CD4-positive, alpha-beta memory T cell (primary cell): ENCODE measurements at regions of chr20 and their contacts with region 1.

Region 1: DNA sequence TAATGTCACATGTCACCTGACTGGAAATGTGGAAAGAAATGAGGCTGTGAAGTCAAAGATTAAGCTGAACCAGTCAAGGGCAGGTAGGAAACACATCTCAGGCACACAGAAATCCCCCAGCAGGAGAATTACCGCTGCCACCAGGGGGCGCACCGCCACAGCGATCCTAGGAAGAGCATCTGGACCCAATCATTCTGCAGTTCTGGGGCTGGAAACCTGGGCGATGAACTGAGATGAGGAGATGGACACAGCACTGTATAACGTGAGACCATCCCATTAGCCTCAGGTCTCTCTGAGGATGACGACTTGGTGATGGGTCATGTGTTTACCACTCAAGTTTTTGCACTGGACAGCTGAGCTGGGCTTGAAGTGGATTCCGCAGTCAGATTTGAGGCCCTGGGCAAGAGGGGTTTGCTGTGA is 6.5 kb upstream of the SLC24A3 start:
- DNase-seq: peak in 3 of 5 donors; percentile 10 to 20 (median 17)
- H3K4me3 ChIP-seq: no peak overlapping the region
- H3K4me3 Mint-ChIP-seq: no peak overlapping the region
- H3K27ac ChIP-seq: no peak overlapping the region
- H3K27ac Mint-ChIP-seq: no peak overlapping the region
- H3K4me1 ChIP-seq: no peaks in the 10 kb centered on the region
- H3K4me1 Mint-ChIP-seq: no peaks in the 10 kb centered on the region
- H3K27me3 ChIP-seq: no peaks in the 10 kb centered on the region
- H3K27me3 Mint-ChIP-seq: peaks cover 10 to 18% of the 10 kb centered on the region in 2 donors

Region 2: DNA sequence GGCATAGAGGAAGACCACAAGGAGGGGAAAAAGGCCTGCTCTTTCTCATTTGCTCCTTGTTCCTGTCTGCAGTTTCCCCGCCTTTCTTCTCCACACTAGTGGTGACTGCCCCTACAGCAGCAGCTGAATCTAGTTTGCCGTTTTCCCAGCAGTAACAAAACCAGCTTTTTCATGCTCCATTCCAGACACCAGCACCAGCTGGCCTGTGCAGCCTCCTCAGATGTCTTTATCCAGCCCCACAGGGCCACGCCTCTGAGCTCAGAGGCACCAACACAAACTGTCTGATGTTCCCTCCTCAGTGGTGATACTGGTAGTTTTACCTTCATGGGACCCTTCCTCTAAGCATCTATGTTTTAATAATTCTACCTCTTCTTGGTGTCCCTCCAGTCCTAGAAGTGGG is 64.0 kb before region 1 on chr20:
- CTCF ChIA-PET with region 1: no interaction called
- POLR2A ChIA-PET with region 1: no interaction called
- intact Hi-C with region 1: no loop called
- DNase-seq: no peak
- H3K4me3 ChIP-seq: no peak overlapping the region
- H3K4me3 Mint-ChIP-seq: no peak overlapping the region
- H3K27ac ChIP-seq: no peak overlapping the region
- H3K27ac Mint-ChIP-seq: no peak overlapping the region
- H3K4me1 ChIP-seq: no peaks in the 10 kb centered on the region
- H3K4me1 Mint-ChIP-seq: no peaks in the 10 kb centered on the region
- H3K27me3 ChIP-seq: no peaks in the 10 kb centered on the region
- H3K27me3 Mint-ChIP-seq: peaks cover 2% of the 10 kb centered on the region in 2 donors

Region 3: DNA sequence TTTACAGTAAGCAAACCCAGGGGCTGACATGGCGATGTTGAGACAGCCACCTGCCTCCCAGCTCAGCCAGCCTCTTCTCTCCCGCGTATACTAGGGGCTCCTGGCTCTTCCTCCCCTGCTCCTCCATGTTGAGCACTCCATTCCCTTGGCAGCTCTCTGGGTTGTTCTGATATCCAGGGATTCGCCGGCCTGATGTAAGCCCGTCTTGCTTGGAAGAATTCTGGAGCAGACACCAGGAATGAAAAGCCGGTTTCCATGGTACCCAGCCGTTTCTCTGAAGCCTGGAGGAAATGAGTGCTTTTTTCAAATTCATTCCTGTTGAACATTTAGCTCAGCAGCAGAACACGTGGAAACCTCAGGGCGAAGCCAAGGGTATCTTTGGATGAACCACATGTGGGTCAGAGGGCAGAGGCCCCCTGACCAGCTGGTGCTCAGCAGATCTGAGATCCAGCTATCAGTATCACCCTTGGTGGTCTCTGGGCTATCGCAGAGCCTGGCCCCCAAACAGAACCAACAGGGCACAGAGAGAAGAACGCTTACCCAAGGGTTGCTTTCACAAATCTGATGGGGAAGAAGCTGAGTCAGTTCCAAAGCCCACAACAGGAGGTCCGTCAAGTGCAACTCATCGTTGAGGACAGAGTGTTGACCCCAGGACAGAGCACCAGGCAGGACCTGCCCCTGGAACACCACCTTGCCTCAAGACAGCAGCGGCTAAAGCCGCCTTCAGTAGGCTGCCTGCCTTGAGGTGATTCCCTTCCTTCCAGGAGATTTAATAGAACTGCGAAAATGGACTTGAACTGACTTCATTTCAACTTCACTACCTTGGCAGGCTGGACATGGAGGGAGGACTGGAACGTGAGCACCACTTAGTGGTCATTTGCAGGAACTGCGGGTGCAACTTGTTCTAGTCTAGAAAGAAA is 456.0 kb after region 1 on chr20:
- CTCF ChIA-PET with region 1: no interaction called
- POLR2A ChIA-PET with region 1: no interaction called
- intact Hi-C with region 1: loop called (anchors 5 kb)
- DNase-seq: peak in 4 of 5 donors; percentile 18 to 33 (median 25)
- H3K4me3 ChIP-seq: no peak overlapping the region
- H3K4me3 Mint-ChIP-seq: no peak overlapping the region
- H3K27ac ChIP-seq: no peak overlapping the region
- H3K27ac Mint-ChIP-seq: no peak overlapping the region
- H3K4me1 ChIP-seq: no peaks in the 10 kb centered on the region
- H3K4me1 Mint-ChIP-seq: peaks cover 0 to 1% (median 0%) of the 10 kb centered on the region in 4 donors
- H3K27me3 ChIP-seq: no peaks in the 10 kb centered on the region
- H3K27me3 Mint-ChIP-seq: peaks cover 15 to 28% of the 10 kb centered on the region in 2 donors